SK-N-SH (cell line): ENCODE measurements at regions of chr20 and their contacts with region 1.

Region 1: DNA sequence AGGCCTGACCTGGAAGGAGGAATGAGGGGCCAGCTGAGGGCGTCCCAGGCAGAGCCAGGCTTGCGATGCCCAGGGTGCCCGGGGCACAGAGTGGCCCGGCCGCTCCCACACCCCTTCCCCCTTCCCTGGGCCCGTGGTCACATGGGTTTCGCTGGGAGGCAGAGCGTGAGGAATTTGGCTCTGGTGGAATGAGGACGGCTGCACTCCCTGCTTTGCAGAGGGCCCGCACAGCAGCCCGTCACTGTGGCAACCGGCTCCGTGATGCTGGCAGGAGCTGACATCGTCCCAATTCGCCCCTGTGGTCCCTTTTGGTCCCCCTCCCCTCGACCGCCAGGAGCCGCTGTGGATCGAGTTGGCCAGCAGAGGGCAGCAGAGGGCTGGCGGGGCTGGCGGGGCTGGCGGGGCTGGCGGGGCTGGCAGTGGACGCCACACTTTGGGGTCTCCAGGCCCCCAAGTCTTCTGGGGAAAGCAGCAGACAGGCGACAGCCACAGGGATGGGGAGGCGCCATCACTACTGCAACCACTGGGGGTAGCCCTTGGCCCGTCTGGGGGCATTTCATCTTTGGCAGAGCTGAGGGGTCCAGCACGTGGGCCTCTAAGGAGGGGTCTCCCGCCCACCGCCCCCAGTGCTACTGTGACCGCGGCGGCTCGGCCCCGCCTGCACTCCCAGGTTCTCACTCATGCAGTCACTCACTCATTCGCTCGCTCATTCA is 49.6 kb upstream of the BHLHE23 start:
- DNase-seq: peak; percentile 89
- H3K4me3 ChIP-seq: peak overlapping the region in 1 of 2 experiments; percentile 48; a peak in 1 of 4 replicates
- H3K27ac ChIP-seq: no peak overlapping the region
- H3K4me1 ChIP-seq: peaks cover 0 to 12% of the 10 kb centered on the region in 2 experiments; a peak in 1 of 4 replicates
- H3K27me3 ChIP-seq: peaks cover 10% of the 10 kb centered on the region; the same call in 1 of the 2 replicates
- CTCF ChIP-seq: peak; percentile 94
- EP300 ChIP-seq: no peak
- RAD21 ChIP-seq: peak; percentile 61

Region 2: DNA sequence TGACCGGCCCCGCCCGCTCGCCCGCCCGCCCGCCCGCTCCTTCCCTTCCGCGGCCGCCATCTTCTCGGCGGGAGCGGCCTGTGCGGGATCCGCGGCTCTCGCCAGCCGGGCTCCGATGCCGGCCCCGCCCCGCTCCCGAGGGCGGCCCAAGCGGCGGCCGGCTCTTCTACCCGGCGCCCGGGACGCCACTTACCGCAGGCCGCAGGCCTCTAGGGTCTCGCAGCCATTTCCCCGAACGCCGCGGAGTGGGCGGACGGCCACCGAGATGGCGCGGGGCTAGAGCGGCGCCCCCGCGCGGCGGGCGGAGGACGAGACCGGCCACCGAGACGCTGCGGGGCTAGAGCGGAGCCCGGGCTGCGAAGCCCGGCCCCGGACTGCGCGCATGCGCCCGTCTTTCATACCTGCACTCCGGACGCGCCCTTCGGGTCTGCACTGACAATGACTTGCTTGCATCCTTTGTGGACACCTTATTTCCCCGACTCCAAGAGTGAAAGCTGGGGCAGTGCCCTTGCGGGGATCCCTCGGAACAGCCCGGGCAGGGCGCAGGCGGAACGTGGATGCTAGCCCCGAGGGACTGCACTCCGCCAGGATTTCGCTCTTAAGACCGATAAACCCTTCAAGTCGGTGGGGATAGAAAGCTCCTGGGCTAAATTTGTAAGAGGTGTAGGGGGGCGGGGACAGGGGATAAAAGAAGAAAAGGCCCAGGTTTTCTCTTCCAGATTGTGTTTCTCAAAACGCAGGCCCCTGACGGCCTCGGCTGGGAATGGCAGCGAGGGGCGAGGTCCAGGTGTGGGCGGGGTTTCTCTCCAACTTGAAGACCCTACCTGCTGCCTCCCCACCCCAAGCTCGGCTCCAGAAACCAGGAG is 129.9 kb before region 1 on chr20 and contains the start of gene DIDO1:
- CTCF ChIA-PET with region 1: no interaction called
- POLR2A ChIA-PET with region 1: no interaction called
- DNase-seq: peak; percentile 99
- H3K4me3 ChIP-seq: peak within 1 kb of the TSS; percentile 86 to 95
- H3K27ac ChIP-seq: peak within 1 kb of the TSS; percentile 86 to 88
- H3K4me1 ChIP-seq: peaks cover 15 to 27% of the 10 kb centered on the region in 2 experiments; a peak in 3 of 4 replicates
- H3K27me3 ChIP-seq: no peaks in the 10 kb centered on the region
- CTCF ChIP-seq: peak; percentile 56
- EP300 ChIP-seq: no peak
- RAD21 ChIP-seq: no peak
- polyA plus RNA-seq, gene DIDO1: 14.7 and 15.6 TPM in 2 replicates

Region 3: DNA sequence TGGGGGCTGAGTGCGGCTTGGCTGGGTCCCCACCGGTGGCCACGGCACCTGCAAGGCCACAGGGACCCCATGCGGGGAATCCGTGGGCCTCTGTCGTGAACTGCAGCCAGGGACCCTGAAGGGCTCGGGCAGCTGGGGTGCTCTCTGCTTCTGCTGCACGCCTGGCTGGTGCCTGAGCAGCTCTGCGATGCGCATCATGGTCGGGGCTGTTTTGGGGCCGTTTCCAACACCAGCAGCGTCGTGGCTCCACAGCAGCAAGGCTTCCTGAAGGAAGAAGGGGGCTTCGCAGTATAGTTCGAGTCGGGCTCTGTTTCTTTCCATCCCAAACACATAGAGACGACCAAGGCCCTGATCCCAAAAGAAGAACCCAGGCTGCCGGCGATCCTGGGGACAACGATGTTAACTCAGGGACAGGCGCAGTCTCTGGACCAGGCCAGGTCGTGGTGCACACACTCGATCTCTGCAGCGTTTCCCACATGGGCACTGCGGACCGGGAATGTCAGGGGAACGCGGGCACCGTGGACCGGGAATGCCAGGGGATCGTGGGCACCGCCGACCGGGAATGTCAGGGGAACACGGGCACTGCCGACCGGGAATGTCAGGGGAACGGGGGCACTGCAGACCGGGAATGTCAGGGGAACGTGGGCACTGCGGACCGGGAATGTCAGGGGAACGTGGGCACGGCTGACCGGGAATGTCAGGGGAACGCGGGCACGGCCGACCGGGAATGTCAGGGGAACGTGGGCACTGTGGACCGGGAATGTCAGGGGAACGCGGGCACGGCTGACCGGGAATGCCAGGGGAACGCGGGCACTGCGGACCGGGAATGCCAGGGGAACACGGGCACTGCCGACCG is 12.8 kb before region 1 on chr20:
- CTCF ChIA-PET with region 1: interaction called, 22 read pairs
- POLR2A ChIA-PET with region 1: no interaction called
- DNase-seq: no peak
- H3K4me3 ChIP-seq: no peak overlapping the region
- H3K27ac ChIP-seq: no peak overlapping the region
- H3K4me1 ChIP-seq: no peaks in the 10 kb centered on the region
- H3K27me3 ChIP-seq: peaks cover 53% of the 10 kb centered on the region
- CTCF ChIP-seq: no peak
- EP300 ChIP-seq: no peak
- RAD21 ChIP-seq: no peak

Region 4: DNA sequence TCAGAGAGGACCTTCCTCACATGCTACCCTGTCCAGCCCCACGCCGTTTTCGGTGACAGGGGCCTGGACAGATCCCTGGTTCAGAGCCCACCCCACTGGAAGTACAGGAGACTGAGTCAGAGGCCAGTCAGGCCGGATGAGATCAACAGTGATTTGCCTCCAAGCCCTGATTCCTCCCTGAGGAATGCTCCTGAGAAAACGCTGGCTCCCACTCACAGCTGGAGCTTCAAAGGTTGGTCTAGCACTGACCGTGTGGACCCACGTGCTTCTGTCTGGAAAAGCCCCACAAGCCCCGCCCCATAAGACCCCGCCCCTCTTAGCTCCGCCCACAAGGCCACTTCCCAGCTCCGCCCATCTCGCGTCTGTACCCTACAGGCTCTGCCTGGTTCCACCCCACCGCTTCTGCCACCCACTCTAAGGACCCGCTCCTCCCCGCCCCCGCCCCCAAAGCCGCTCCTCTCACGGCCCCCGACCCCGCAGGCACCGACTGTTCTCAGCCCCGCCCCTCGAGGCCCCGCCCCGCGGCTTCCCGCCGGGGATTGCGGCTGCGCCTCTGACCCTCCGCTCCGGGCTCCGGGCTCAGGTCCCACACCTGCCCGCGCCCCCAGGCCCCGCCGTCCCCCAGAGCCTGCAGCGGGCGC is 15.3 kb after region 1 on chr20:
- CTCF ChIA-PET with region 1: interaction called, 36 read pairs
- POLR2A ChIA-PET with region 1: no interaction called
- DNase-seq: peak; percentile 87
- H3K4me3 ChIP-seq: no peak overlapping the region
- H3K27ac ChIP-seq: no peak overlapping the region
- H3K4me1 ChIP-seq: peaks cover 0 to 5% of the 10 kb centered on the region in 2 experiments; a peak in 1 of 4 replicates
- H3K27me3 ChIP-seq: peaks cover 17% of the 10 kb centered on the region; the same call in 1 of the 2 replicates
- CTCF ChIP-seq: no peak
- EP300 ChIP-seq: no peak
- RAD21 ChIP-seq: no peak

Region 5: GRCh38 chr20:63167376-63168173 is 111.2 kb after region 1 on chr20:
- CTCF ChIA-PET with region 1: interaction called, 11 read pairs
- POLR2A ChIA-PET with region 1: no interaction called
- DNase-seq: peak; percentile 72
- H3K4me3 ChIP-seq: no peak overlapping the region
- H3K27ac ChIP-seq: no peak overlapping the region
- H3K4me1 ChIP-seq: no peaks in the 10 kb centered on the region
- H3K27me3 ChIP-seq: peaks cover 18% of the 10 kb centered on the region; the same call in 1 of the 2 replicates
- CTCF ChIP-seq: no peak
- EP300 ChIP-seq: no peak
- RAD21 ChIP-seq: no peak

Region 6: DNA sequence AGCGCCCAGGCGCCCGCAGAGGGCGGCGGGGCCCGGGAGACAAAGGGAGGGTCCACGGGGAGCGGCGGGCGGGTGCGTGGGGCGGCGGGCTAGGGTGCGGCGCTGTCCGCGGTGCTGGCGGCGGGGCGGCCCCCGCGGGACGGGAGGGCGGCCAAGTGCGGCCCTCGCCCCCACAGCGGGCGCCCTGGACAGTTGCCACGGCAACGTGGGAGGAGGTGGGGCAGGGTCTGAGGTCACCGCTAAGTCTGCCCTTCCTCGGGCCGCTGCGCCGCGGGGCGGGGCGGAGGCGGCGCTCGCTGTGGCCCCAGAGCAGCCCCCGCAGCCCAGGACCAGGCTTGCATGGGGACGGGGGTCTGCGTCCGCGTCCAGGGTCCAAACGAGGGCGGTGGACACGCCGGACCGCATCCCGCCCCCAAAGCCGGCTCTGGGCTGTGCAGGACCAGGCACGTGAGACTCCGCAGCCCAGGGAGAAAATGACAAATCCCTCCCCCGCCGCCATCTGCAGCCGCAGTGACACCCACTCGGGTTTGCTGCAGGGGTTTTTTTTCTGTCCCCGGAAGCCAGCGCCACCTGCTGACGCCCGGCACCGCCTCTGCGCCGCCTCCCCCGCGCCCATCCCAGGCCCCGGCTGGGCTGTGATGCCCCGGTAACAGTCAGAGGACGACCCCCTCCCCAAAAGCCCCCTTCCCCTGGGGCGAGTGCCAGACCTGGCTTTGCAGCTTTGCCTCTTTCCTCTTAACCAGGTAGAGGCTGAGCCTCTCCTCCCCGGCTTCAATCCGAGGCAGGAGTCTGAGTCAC is 122.7 kb after region 1 on chr20:
- CTCF ChIA-PET with region 1: interaction called, 89 read pairs
- POLR2A ChIA-PET with region 1: no interaction called
- DNase-seq: peak; percentile 82
- H3K4me3 ChIP-seq: no peak overlapping the region; a peak in 1 of 4 replicates
- H3K27ac ChIP-seq: no peak overlapping the region
- H3K4me1 ChIP-seq: no peaks in the 10 kb centered on the region; a peak in 1 of 4 replicates
- H3K27me3 ChIP-seq: peaks cover 48% of the 10 kb centered on the region
- CTCF ChIP-seq: peak; percentile 48
- EP300 ChIP-seq: no peak
- RAD21 ChIP-seq: peak; percentile 41; the same call in 1 of the 2 replicates

Region 7: GRCh38 chr20:63216041-63216848 is 159.9 kb after region 1 on chr20 and contains the start of gene YTHDF1:
- CTCF ChIA-PET with region 1: interaction called, 10 read pairs
- POLR2A ChIA-PET with region 1: no interaction called
- DNase-seq: peak; percentile 100
- H3K4me3 ChIP-seq: peak within 1 kb of the TSS; percentile 58 to 82
- H3K27ac ChIP-seq: peak within 1 kb of the TSS; percentile 42 to 87; a peak in 3 of 4 replicates
- H3K4me1 ChIP-seq: peaks cover 10 to 21% of the 10 kb centered on the region in 2 experiments; a peak in 3 of 4 replicates
- H3K27me3 ChIP-seq: no peaks in the 10 kb centered on the region
- CTCF ChIP-seq: no peak
- EP300 ChIP-seq: 0 out of 4 replicates have a peak, but pooled peaks of 1 of the 2 experiments have one; percentile 18
- RAD21 ChIP-seq: no peak
- polyA plus RNA-seq, gene YTHDF1: 15.5 and 17.0 TPM in 2 replicates